ENCODE measurements at regions of chr20 and their contacts with region 1.

Region 1: GRCh38 chr20:12925214-12925755 is 83.5 kb upstream of the SPTLC3 start:
- DNase-seq: peak; percentile 65
- ATAC-seq: peak; percentile 79
- H3K4me3 Mint-ChIP-seq: no peak overlapping the region
- H3K27ac Mint-ChIP-seq: no peak overlapping the region
- H3K4me1 Mint-ChIP-seq: peaks cover 11% of the 10 kb centered on the region
- H3K27me3 Mint-ChIP-seq: no peaks in the 10 kb centered on the region

Region 2: DNA sequence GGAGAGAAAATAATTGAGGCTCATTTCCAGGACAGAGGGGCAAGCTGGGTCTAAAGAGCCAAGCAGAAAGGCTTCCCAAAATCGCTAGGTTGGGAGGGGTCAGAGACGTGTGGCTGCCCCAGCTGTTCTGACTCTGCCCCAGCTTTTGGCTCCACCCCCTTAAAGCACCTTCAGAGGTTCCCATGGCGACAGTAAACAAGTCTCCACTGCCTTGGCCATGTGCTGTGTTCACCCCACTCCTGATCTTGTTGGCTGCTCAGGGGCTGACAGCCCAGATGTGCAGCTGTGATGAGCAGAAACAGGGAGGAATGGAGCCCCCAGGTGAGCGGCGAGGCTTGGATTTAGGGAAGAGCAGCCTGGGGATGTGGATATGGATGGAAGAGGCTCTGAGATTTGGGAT is 10.8 kb after region 1 on chr20:
- CTCF ChIA-PET with region 1: interaction called, 12 read pairs
- POLR2A ChIA-PET with region 1: no interaction called
- intact Hi-C with region 1: no loop called
- DNase-seq: no peak
- ATAC-seq: no peak
- H3K4me3 Mint-ChIP-seq: no peak overlapping the region
- H3K27ac Mint-ChIP-seq: no peak overlapping the region
- H3K4me1 Mint-ChIP-seq: no peaks in the 10 kb centered on the region
- H3K27me3 Mint-ChIP-seq: no peaks in the 10 kb centered on the region

Region 3: DNA sequence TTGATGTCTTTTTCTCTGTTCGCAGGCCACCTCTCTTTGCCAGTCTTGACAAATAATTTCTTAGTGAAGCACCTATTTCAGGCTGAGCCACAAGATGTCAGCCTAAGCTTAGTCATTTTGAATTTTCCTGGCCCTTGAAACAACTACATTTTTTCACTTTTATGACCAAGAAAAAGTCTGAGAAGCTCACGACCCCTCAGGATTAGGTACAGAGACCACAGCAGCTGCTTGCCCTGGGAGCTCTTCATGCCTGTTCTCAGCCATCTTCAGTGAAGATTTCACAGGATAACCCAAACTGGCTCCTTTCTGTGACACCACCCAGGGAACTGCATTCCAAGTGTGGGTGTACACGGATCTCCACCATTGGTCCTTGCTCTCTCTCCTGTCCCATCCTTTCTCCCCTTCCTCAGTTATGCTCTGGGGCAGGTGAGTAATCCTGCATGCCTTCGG is 45.1 kb after region 1 on chr20:
- CTCF ChIA-PET with region 1: interaction called, 14 read pairs
- POLR2A ChIA-PET with region 1: no interaction called
- intact Hi-C with region 1: loop called (anchors 1 to 2 kb)
- DNase-seq: peak; percentile 29
- ATAC-seq: no peak
- H3K4me3 Mint-ChIP-seq: no peak overlapping the region
- H3K27ac Mint-ChIP-seq: no peak overlapping the region
- H3K4me1 Mint-ChIP-seq: peaks cover 17% of the 10 kb centered on the region
- H3K27me3 Mint-ChIP-seq: no peaks in the 10 kb centered on the region

Region 4: DNA sequence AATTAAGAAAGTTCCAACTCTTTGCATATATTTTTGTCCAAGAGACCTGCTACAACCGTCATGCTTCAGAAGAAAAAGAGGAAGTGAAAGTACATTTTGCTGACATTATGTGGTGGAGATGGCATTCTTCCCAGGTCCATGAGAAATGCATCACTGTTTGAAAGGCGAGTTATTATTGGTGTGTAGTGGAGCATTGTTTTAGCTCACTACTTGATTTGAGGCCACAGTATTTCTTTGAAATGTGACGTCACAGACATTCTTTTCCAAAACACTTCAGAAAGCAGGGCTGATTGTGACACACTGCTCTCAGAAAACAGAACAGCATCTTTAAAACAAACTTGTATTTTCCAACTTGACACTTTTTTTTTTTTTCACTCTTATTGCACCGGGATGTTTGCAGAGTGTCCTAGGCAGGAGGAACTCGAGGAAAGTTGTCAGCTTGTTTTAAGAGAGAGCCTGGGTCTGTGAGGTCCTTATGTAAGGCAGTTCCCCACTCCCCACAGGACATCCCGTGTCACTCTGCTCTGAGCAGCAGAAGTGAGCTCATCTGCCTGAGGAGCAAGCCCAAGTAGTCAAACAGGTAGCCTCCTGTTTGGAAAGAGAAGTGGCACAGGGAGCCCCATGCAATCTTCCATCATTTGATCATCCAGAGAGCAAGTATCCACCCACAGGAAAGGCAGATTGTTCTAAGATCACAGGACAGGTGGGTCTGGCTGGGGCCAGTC is 84.6 kb after region 1 on chr20:
- CTCF ChIA-PET with region 1: interaction called, 6 read pairs
- POLR2A ChIA-PET with region 1: no interaction called
- intact Hi-C with region 1: loop called in 1 of 2 experiments (anchors 5 kb)
- DNase-seq: peak; percentile 22
- ATAC-seq: peak; percentile 76
- H3K4me3 Mint-ChIP-seq: peak overlapping the region; percentile 70
- H3K27ac Mint-ChIP-seq: peak overlapping the region; percentile 80
- H3K4me1 Mint-ChIP-seq: peaks cover 42% of the 10 kb centered on the region
- H3K27me3 Mint-ChIP-seq: no peaks in the 10 kb centered on the region

Region 5: GRCh38 chr20:13105864-13106457 is 180.7 kb after region 1 on chr20:
- CTCF ChIA-PET with region 1: interaction called, 26 read pairs
- POLR2A ChIA-PET with region 1: no interaction called
- intact Hi-C with region 1: loop called (anchors 1 kb)
- DNase-seq: no peak
- ATAC-seq: no peak
- H3K4me3 Mint-ChIP-seq: no peak overlapping the region
- H3K27ac Mint-ChIP-seq: no peak overlapping the region
- H3K4me1 Mint-ChIP-seq: no peaks in the 10 kb centered on the region
- H3K27me3 Mint-ChIP-seq: peaks cover 3% of the 10 kb centered on the region

Region 6: DNA sequence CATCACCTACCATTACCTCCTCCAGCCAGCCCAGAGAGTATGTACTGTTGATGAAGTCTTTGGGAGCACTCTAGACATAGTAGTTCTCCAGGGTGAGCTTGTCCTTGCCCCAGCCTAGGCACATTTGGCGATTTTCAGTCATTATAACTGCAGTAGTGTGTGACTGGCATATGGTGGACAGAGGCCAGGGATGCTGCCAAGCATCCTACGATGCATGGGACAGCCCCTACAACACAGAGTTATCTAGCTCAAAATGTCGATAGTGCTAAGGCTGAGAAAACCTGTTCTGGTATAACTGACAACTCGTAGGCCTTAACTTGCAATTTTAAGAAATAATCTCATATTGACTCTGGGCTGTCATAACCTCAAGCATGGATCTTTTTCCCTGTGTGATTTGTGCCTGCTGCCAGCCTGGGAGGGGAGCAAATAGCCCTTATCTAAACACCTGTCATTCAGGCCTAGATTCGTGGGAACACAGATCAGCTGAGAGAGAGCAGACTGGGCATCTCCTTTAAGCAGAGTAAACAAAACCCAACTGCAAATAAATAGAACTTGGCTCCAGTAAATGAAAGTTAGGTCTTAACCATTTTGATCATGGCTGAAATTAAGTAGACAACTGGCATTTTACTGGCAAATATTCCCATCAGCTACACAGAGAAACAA is 186.1 kb after region 1 on chr20:
- CTCF ChIA-PET with region 1: interaction called, 26 read pairs
- POLR2A ChIA-PET with region 1: no interaction called
- intact Hi-C with region 1: loop called (anchors 1 kb)
- DNase-seq: no peak
- ATAC-seq: no peak
- H3K4me3 Mint-ChIP-seq: no peak overlapping the region
- H3K27ac Mint-ChIP-seq: no peak overlapping the region
- H3K4me1 Mint-ChIP-seq: no peaks in the 10 kb centered on the region
- H3K27me3 Mint-ChIP-seq: peaks cover under 1% of the 10 kb centered on the region